BJ (cell line): ENCODE measurements at regions of chr12 and their contacts with region 1.

Region 1: GRCh38 chr12:132414634-132415326 is 75.2 kb upstream of the FBRSL1 start:
- DNase-seq: no peak
- H3K4me3 ChIP-seq: no peak overlapping the region
- H3K27me3 ChIP-seq: peaks cover 4% of the 10 kb centered on the region; the same call in 1 of the 2 replicates
- CTCF ChIP-seq: peak; percentile 97

Region 2: DNA sequence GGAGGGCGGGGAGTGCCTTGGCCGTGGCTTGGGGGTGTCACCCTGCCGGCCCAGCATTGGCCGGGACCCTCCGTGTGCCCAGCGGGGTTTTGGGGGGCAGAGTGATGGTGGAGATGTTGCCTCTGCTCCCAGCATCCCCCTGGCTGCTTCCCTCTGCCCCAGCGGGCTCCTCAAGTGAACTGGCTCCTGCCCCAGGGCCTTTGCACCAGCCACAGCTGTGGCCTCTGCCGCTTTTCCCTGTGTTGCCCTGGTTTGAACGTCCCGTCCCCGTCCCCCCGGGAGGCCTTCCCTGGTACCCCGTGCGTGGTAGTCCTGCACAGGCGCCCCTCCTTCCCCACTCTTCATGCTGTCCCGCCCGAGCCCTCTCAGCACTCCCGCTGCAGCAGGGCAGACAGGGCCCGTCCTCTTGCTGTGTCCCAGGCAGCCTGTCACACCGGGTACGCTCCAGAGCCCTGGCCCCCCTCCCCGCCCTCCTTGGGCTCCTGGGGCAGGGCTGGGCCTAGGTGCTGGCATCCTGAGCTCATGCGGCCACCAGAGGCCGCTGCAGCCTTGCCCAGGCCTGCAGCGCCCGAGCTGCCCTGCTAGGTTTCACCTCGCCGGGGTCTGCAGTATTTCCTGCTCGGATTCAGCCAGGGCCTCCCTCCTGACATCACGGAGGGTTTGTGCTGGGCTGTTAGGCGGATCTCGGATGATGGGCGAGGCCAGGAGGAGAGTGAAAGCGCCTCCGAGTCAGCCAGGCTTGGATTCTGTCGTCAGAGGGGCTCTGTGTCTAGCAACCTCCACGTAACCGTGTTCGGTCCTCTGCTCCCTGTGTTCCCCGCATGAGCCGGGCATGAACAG is 261.1 kb before region 1 on chr12:
- CTCF ChIA-PET with region 1: interaction called, 41 read pairs
- POLR2A ChIA-PET with region 1: interaction called, 4 read pairs
- DNase-seq: no peak
- H3K4me3 ChIP-seq: no peak overlapping the region
- H3K27me3 ChIP-seq: no peaks in the 10 kb centered on the region
- CTCF ChIP-seq: peak; percentile 98

Region 3: GRCh38 chr12:132428936-132429601 is 14.3 kb after region 1 on chr12:
- CTCF ChIA-PET with region 1: interaction called, 22 read pairs
- POLR2A ChIA-PET with region 1: no interaction called
- DNase-seq: no peak
- H3K4me3 ChIP-seq: no peak overlapping the region
- H3K27me3 ChIP-seq: peaks cover 4% of the 10 kb centered on the region
- CTCF ChIP-seq: no peak

Region 4: DNA sequence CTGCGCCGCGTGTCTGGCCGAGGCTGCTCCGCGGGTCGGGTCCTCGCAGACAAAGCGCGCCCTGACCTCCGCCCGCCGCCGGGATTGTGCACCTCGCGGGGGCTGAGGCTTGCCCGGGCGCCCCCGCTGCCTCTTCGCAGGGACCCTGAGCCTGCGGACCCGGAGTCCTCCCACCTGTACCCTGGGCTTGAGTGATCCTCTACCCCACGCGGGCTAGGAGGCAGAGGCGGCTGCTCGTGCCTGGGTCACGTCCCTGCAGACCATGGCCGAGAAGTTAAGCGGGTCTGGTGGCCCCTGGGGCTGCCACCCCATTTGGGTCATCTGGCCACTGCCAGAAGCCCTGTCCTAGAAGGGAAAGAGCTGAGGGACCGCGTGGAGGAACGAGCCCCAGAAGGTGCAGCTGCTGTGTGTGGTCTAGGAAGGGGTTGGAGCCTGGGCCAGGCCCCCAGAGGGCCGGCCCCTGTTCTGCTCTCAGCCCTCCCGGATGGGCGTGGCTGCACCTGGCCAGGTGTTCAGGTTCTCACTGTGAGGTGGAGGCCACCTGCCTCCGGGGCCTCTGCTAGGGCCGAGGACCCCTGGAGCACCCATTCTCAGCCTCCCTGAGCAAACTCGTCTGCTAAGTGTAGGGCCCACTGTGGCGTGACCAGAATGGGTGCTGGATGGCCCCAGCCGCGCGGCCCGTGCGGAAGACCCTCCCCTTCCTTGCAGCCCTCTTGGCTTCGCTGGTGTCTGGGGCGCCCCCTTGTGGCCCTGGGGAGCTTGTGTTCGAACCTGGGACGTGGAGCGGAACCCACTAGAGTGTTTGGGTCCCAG is 146.0 kb after region 1 on chr12:
- CTCF ChIA-PET with region 1: interaction called, 12 read pairs
- POLR2A ChIA-PET with region 1: no interaction called
- DNase-seq: no peak
- H3K4me3 ChIP-seq: peak overlapping the region; percentile 58
- H3K27me3 ChIP-seq: no peaks in the 10 kb centered on the region
- CTCF ChIP-seq: peak; percentile 80

Region 5: DNA sequence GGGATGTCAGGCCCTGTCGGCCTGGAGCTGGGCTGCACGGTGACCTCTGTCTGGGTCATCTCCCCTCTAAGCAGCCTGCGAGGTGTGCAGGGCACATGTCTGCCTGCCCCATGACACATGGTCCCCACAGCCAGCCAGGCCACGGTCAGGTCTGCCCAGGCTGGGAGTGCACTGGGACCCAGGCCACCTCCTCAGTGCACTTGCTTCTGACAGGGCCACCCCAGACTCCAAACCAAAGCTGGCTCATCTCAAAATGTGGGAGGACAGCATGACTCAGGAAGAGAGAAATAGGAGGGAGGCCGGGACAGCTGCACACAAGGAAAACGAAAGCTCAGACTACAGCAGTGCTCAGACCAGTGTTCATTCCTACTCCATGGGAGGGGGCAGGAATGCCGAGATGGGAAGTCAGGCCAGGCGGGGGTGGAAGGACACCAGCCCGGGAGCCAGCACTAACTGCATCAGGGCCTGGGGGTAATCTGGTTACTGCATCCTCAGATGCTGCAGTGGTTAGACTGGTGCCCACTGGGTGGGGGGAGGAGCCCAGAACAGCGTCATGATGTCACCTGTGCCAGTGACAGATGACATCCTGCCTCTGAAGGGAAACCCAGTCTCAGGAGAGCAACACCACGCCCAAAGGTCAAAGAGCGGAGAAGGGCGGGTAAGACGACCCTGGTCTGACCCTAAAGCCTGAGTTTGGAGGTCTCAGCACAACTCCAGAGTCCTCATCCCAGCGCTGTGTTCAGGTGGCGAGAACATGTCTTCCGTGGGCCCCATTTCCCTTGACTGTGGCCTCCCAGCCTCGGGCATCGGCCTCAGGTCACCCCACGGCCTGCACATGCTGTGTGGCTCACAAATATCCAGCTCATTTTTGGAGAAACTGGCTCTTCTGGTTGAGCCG is 207.9 kb after region 1 on chr12:
- CTCF ChIA-PET with region 1: interaction called, 51 read pairs
- POLR2A ChIA-PET with region 1: no interaction called
- DNase-seq: peak; percentile 31
- H3K4me3 ChIP-seq: no peak overlapping the region
- H3K27me3 ChIP-seq: peaks cover 10% of the 10 kb centered on the region
- CTCF ChIP-seq: no peak